ENCODE measurements at regions of chr5 and their contacts with region 1.

Region 1: GRCh38 chr5:138575194-138576015 is at the start of gene HSPA9:
- DNase-seq: peak; percentile 99
- ATAC-seq: peak; percentile 93
- H3K4me3 ChIP-seq: peak within 1 kb of the TSS; percentile 64 to 93
- H3K27ac ChIP-seq: peak within 1 kb of the TSS; percentile 94
- H3K4me1 ChIP-seq: peaks cover 12% of the 10 kb centered on the region
- H3K27me3 ChIP-seq: no peaks in the 10 kb centered on the region
- CTCF ChIP-seq: no peak
- total RNA-seq, gene HSPA9: 424 TPM

Region 2: DNA sequence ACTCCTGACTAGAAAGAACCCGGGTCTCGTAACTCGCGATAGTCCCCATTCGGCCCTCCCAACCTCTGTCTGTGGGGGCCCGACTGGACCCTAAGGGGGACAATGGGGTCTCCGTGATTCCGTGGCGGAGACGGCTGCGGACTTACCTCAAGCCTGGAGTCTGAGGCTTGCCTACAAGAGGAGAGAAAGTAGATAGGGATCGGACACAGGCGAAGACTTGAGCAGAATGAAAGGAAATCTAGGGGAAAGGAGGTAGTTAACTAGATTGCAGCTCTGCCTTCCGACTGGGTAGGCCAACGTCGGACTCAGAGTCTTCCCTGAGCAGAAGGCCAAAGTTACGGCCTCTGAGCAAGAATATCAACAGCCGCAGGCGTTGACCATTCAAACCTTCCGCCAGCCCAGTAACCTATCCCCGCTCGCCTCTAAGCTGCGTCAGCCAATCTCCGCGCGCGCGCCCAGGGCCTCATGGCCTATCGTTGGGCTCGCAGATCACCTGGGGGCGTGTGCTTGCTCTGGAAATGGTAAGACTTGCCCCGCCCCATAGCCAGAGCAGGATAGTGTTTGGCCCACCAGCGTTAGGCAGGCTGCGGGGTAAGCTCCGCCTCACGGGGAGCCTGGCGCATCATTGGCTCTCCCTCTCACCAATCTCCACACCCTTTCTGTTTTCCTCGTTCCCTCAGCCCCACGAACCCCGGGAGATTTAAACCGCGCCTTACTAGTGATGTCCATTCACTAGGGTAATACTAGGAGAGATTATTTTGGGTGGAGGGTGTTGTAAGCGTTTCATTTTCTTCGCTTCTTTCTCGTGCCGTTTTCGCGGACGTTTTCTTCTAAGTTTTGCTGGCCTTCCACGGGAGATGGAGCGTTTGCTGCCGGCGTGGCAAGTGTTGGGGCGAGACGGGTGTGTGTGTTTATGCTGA is 243.7 kb before region 1 on chr5 and contains the start of gene CDC25C:
- CTCF ChIA-PET with region 1: no interaction called
- POLR2A ChIA-PET with region 1: interaction called, 10 read pairs
- in situ Hi-C with region 1: no loop called
- intact Hi-C with region 1: no loop called
- DNase-seq: peak; percentile 95
- ATAC-seq: peak; percentile 99
- H3K4me3 ChIP-seq: peak within 1 kb of the TSS; percentile 89 to 95
- H3K27ac ChIP-seq: peak within 1 kb of the TSS; percentile 95
- H3K4me1 ChIP-seq: peaks cover 10% of the 10 kb centered on the region; the same call in 1 of the 2 replicates
- H3K27me3 ChIP-seq: no peaks in the 10 kb centered on the region
- CTCF ChIP-seq: no peak
- total RNA-seq, gene CDC25C: 14.1 TPM

Region 3: DNA sequence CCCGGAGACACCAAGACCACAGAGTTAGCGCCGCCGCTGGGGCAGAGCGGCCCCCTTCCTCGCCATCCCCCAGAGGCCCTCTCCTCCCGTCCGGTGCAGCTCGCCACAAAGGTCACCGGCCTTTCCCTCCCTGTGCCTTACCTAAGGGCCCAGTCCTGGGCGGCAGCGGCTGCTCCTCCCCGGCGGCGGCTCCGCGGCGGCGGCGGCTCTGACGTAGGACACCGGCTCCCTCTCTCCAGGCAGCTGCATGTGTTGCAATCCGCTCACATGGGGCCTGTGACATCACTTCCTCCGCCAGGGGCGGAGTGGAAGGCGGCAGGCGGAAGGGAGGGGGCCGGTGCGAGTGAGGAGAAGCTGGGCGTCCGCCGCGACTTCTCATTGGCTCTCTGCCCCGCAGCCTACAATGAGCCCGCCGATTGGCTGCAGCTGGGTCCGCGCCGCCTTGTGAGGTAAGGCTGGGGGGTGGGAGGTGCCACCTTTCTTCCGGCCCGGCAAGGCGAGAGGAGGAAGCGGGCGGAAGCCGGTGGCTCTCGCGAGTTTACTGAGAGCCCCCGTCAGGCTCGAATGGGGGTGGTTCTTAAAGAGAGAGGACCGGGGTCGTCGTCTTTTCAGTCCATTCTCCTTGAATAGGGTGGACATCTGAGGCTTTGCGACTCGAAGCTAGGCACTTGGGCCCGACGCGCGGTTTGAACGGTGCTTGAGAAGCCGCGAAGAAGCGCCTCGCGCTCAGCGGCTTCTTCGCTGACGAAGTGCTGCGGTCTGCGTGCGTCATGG is 32.3 kb before region 1 on chr5 and contains the start of gene ETF1:
- CTCF ChIA-PET with region 1: no interaction called
- POLR2A ChIA-PET with region 1: interaction called, 13 read pairs
- in situ Hi-C with region 1: no loop called
- intact Hi-C with region 1: no loop called
- DNase-seq: peak; percentile 92
- ATAC-seq: peak; percentile 95
- H3K4me3 ChIP-seq: peak within 1 kb of the TSS; percentile 90 to 97
- H3K27ac ChIP-seq: peak within 1 kb of the TSS; percentile 95
- H3K4me1 ChIP-seq: peaks cover 37% of the 10 kb centered on the region
- H3K27me3 ChIP-seq: no peaks in the 10 kb centered on the region
- CTCF ChIP-seq: no peak
- total RNA-seq, gene ETF1: 168 TPM

Region 4: GRCh38 chr5:138663009-138663408 is 87.6 kb after region 1 on chr5:
- CTCF ChIA-PET with region 1: no interaction called
- POLR2A ChIA-PET with region 1: no interaction called
- in situ Hi-C with region 1: no loop called
- intact Hi-C with region 1: no loop called
- DNase-seq: no peak
- ATAC-seq: no peak
- H3K4me3 ChIP-seq: no peak overlapping the region
- H3K27ac ChIP-seq: no peak overlapping the region
- H3K4me1 ChIP-seq: no peaks in the 10 kb centered on the region
- H3K27me3 ChIP-seq: no peaks in the 10 kb centered on the region
- CTCF ChIP-seq: no peak

Region 5: DNA sequence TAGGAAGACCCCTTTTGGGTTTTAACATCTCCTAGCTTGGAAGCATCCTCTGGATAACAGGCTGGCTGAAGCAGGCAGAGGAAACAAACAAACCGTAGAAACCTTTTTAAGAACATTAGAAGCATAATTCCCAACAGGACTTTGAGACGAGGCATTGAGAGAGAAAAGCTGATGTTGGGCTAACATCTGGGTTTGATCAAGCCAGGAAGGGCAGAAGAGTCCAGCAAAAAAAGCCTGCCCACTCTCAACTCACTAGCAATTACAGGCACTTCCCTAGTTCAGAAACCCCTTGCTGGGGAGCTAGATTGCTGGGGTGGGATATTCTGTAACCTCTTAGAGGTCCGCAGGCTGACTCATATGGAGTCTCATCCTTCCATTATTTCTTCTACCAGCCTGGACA is 102.4 kb after region 1 on chr5:
- CTCF ChIA-PET with region 1: no interaction called
- POLR2A ChIA-PET with region 1: interaction called, 10 read pairs
- in situ Hi-C with region 1: no loop called
- intact Hi-C with region 1: no loop called
- DNase-seq: no peak
- ATAC-seq: no peak
- H3K4me3 ChIP-seq: no peak overlapping the region
- H3K27ac ChIP-seq: no peak overlapping the region
- H3K4me1 ChIP-seq: no peaks in the 10 kb centered on the region
- H3K27me3 ChIP-seq: no peaks in the 10 kb centered on the region
- CTCF ChIP-seq: no peak

Region 6: DNA sequence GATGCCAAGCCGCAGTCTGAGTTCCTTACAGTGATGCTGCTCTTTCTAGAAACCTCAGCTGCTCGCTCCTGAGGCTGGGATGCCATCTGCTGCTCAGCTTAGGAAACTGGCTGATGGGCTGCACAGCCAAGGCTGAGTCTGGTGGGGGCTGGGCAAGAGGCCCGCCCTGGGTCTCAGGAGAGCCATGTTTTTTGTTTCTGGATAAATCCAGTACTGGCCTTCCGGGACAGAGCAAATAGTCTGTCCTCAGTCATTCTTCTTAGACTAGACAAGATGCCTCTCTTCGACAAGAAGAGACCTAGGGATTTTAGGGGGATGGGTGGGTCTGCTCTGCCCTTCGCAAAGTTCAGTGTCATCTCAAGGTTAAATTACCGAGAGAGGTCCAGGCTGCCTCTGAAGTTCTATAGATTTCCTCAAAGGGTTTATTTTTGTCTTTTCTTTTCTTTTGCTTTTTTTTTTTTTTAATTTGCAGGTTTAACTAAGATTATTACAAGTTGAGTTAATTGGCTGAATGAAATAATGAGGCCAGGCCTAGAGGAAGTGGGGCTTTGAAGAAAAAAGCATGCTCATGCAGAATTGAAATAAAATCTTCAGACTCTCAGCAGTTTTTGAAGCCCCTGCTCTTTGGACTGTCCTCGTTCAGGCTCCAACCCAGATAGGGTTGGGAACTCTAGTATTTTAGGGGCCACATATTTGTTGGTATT is 687.5 kb after region 1 on chr5:
- CTCF ChIA-PET with region 1: interaction called, 8 read pairs
- POLR2A ChIA-PET with region 1: no interaction called
- in situ Hi-C with region 1: no loop called
- intact Hi-C with region 1: loop called (anchors 2 kb)
- DNase-seq: peak; percentile 71
- ATAC-seq: peak; percentile 100
- H3K4me3 ChIP-seq: no peak overlapping the region
- H3K27ac ChIP-seq: no peak overlapping the region
- H3K4me1 ChIP-seq: 0 out of 2 replicates have a peak, but pooled peaks cover 3% of the 10 kb centered on the region
- H3K27me3 ChIP-seq: no peaks in the 10 kb centered on the region
- CTCF ChIP-seq: peak; percentile 97

Measured in Panc1 (cell line).